Tibial artery (tissue), 4 donors: ENCODE measurements at regions of chrX and their contacts with region 1.

Region 1: GRCh38 chrX:130110379-130111219 is at the start of gene ELF4:
- DNase-seq: peak in 1 of 2 donors; percentile 71
- H3K4me3 ChIP-seq: peak within 1 kb of the TSS; percentile 84 to 90
- H3K27ac ChIP-seq: peak within 1 kb of the TSS; percentile 96 to 98
- H3K4me1 ChIP-seq: peaks cover 0 to 43% (median 18%) of the 10 kb centered on the region in 4 donors
- H3K27me3 ChIP-seq: no peaks in the 10 kb centered on the region
- CTCF ChIP-seq: no peak

Region 2: GRCh38 chrX:129529685-129530281 is 580.8 kb before region 1 on chrX:
- intact Hi-C with region 1: no loop called
- DNase-seq: no peak
- H3K4me3 ChIP-seq: no peak overlapping the region
- H3K27ac ChIP-seq: no peak overlapping the region
- H3K4me1 ChIP-seq: no peaks in the 10 kb centered on the region
- H3K27me3 ChIP-seq: no peaks in the 10 kb centered on the region
- CTCF ChIP-seq: no peak

Region 3: GRCh38 chrX:130176354-130176776 is 65.8 kb after region 1 on chrX:
- intact Hi-C with region 1: loop called (anchors 5 kb)
- DNase-seq: no peak
- H3K4me3 ChIP-seq: no peak overlapping the region
- H3K27ac ChIP-seq: no peak overlapping the region
- H3K4me1 ChIP-seq: peaks cover 0 to 33% (median 9%) of the 10 kb centered on the region in 4 donors
- H3K27me3 ChIP-seq: no peaks in the 10 kb centered on the region
- CTCF ChIP-seq: no peak